Activated CD4-positive, alpha-beta T cell treated with anti-CD3 and anti-CD28 coated beads for 36 hours (primary cell): ENCODE measurements at regions of chr19 and their contacts with region 1.

Region 1: GRCh38 chr19:37370880-37371661 is at the start of gene ZNF527:
- DNase-seq: peak; percentile 98
- ATAC-seq: peak; percentile 99
- H3K4me3 Mint-ChIP-seq: peak within 1 kb of the TSS; percentile 85
- H3K27ac Mint-ChIP-seq: peak within 1 kb of the TSS; percentile 95
- H3K4me1 Mint-ChIP-seq: peaks cover 10% of the 10 kb centered on the region
- H3K27me3 Mint-ChIP-seq: no peaks in the 10 kb centered on the region
- total RNA-seq, gene ZNF527: 5.0 to 5.4 TPM

Region 2: GRCh38 chr19:36573020-36573885 is 797.8 kb before region 1 on chr19 and contains the start of gene ZNF529:
- CTCF ChIA-PET with region 1: no interaction called
- POLR2A ChIA-PET with region 1: no interaction called
- intact Hi-C with region 1: loop called in 1 of 2 experiments (anchors 2 kb)
- DNase-seq: peak; percentile 91
- ATAC-seq: peak; percentile 90
- H3K4me3 Mint-ChIP-seq: peak within 1 kb of the TSS; percentile 83
- H3K27ac Mint-ChIP-seq: peak within 1 kb of the TSS; percentile 93
- H3K4me1 Mint-ChIP-seq: peaks cover 27% of the 10 kb centered on the region
- H3K27me3 Mint-ChIP-seq: no peaks in the 10 kb centered on the region
- total RNA-seq, gene ZNF529: 12.5 to 19.2 TPM

Region 3: GRCh38 chr19:36915992-36916830 is 454.9 kb before region 1 on chr19 and contains the starts of genes ZNF568 and ZNF829:
- CTCF ChIA-PET with region 1: no interaction called
- POLR2A ChIA-PET with region 1: no interaction called
- intact Hi-C with region 1: loop called in 1 of 2 experiments (anchors 1 kb)
- DNase-seq: peak; percentile 97
- ATAC-seq: peak; percentile 98
- H3K4me3 Mint-ChIP-seq: peak within 1 kb of the TSS; percentile 88
- H3K27ac Mint-ChIP-seq: peak within 1 kb of the TSS; percentile 98
- H3K4me1 Mint-ChIP-seq: peaks cover 15% of the 10 kb centered on the region
- H3K27me3 Mint-ChIP-seq: no peaks in the 10 kb centered on the region
- total RNA-seq, gene ZNF568: 6.5 to 8.4 TPM
- total RNA-seq, gene ZNF829: 7.1 TPM

Region 4: GRCh38 chr19:37127999-37128820 is 242.9 kb before region 1 on chr19:
- CTCF ChIA-PET with region 1: no interaction called
- POLR2A ChIA-PET with region 1: no interaction called
- intact Hi-C with region 1: no loop called
- DNase-seq: no peak
- ATAC-seq: no peak
- H3K4me3 Mint-ChIP-seq: no peak overlapping the region
- H3K27ac Mint-ChIP-seq: no peak overlapping the region
- H3K4me1 Mint-ChIP-seq: no peaks in the 10 kb centered on the region
- H3K27me3 Mint-ChIP-seq: no peaks in the 10 kb centered on the region

Region 5: GRCh38 chr19:37217855-37218591 is 153.0 kb before region 1 on chr19 and contains the start of gene ZNF383:
- CTCF ChIA-PET with region 1: no interaction called
- POLR2A ChIA-PET with region 1: no interaction called
- intact Hi-C with region 1: loop called in 1 of 2 experiments (anchors 2 kb)
- DNase-seq: peak; percentile 89
- ATAC-seq: peak; percentile 87
- H3K4me3 Mint-ChIP-seq: peak within 1 kb of the TSS; percentile 93
- H3K27ac Mint-ChIP-seq: peak within 1 kb of the TSS; percentile 99
- H3K4me1 Mint-ChIP-seq: peaks cover 24% of the 10 kb centered on the region
- H3K27me3 Mint-ChIP-seq: no peaks in the 10 kb centered on the region
- total RNA-seq, gene ZNF383: 8.5 to 9.2 TPM

Region 6: GRCh38 chr19:37551129-37551993 is 180.3 kb after region 1 on chr19:
- CTCF ChIA-PET with region 1: no interaction called
- POLR2A ChIA-PET with region 1: interaction called, 4 read pairs
- intact Hi-C with region 1: loop called in 1 of 2 experiments (anchors 1 kb)
- DNase-seq: peak; percentile 87
- ATAC-seq: peak; percentile 86
- H3K4me3 Mint-ChIP-seq: peak overlapping the region; percentile 84
- H3K27ac Mint-ChIP-seq: peak overlapping the region; percentile 87
- H3K4me1 Mint-ChIP-seq: peaks cover 3% of the 10 kb centered on the region
- H3K27me3 Mint-ChIP-seq: no peaks in the 10 kb centered on the region

Region 7: GRCh38 chr19:37779127-37780005 is 408.3 kb after region 1 on chr19 and contains the start of gene ZNF573:
- CTCF ChIA-PET with region 1: no interaction called
- POLR2A ChIA-PET with region 1: interaction called, 4 read pairs
- intact Hi-C with region 1: loop called in 1 of 2 experiments (anchors 1 kb)
- DNase-seq: peak; percentile 90
- ATAC-seq: peak; percentile 94
- H3K4me3 Mint-ChIP-seq: peak within 1 kb of the TSS; percentile 95
- H3K27ac Mint-ChIP-seq: peak within 1 kb of the TSS; percentile 96
- H3K4me1 Mint-ChIP-seq: peaks cover 22% of the 10 kb centered on the region
- H3K27me3 Mint-ChIP-seq: no peaks in the 10 kb centered on the region
- total RNA-seq, gene ZNF573: 8.9 to 9.7 TPM